Ascending aorta (tissue), 2 donors: ENCODE measurements at regions of chr12 and their contacts with region 1.

Region 1: DNA sequence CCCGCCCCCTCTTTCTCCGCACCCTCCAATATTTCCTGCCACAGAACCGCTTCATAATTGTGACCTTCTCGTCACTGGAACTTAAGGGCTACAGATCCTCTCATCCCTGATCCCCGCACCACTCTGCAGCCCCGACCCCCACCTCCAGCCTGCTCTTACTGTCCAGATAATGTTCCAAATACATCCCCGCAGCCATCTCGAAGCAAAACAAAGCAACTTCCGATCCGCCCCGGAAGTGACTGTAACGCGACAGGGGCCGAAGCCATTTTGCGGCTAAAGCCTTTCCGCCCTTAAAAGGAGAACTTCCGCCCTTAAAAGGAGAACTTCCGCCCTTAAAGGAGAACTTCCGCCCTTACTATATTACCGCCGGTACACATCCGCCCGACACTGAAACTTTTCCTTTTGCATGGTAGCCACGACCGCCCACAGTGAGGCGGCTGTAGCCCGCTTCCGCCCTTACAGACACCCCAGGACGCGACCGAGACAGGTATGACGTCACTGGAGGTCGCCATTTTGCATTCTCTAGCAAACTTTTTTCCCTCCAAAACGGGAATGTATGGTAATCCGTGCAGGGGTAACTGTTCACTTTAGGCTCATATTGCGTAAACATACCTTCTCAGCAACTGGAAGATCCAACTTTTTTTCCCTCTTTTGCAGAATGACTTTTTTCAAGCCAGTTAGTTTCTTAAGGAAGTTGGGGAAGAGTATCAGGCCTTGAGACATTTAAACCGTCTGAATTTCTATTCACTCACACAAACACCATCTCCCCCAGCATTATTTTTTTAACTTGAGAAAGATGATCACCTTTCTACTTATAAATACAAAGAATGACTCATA is at the start of gene ING4:
- DNase-seq: peak; percentile 96 to 99
- H3K4me3 ChIP-seq: peak within 1 kb of the TSS; percentile 75 to 82
- H3K27ac ChIP-seq: peak within 1 kb of the TSS; percentile 77 to 80
- H3K4me1 ChIP-seq: peaks cover 4 to 12% of the 10 kb centered on the region in 2 donors
- H3K27me3 ChIP-seq: no peaks in the 10 kb centered on the region
- CTCF ChIP-seq: no peak
- total RNA-seq, gene ING4: 2.6 TPM

Region 2: GRCh38 chr12:6182116-6182898 is 480.8 kb before region 1 on chr12:
- intact Hi-C with region 1: no loop called
- DNase-seq: peak in 1 of 2 donors; percentile 86
- H3K4me3 ChIP-seq: peak overlapping the region in 1 of 2 donors; percentile 33
- H3K27ac ChIP-seq: peak overlapping the region; percentile 89 to 92
- H3K4me1 ChIP-seq: peaks cover 20 to 56% of the 10 kb centered on the region in 2 donors
- H3K27me3 ChIP-seq: no peaks in the 10 kb centered on the region
- CTCF ChIP-seq: no peak

Region 3: DNA sequence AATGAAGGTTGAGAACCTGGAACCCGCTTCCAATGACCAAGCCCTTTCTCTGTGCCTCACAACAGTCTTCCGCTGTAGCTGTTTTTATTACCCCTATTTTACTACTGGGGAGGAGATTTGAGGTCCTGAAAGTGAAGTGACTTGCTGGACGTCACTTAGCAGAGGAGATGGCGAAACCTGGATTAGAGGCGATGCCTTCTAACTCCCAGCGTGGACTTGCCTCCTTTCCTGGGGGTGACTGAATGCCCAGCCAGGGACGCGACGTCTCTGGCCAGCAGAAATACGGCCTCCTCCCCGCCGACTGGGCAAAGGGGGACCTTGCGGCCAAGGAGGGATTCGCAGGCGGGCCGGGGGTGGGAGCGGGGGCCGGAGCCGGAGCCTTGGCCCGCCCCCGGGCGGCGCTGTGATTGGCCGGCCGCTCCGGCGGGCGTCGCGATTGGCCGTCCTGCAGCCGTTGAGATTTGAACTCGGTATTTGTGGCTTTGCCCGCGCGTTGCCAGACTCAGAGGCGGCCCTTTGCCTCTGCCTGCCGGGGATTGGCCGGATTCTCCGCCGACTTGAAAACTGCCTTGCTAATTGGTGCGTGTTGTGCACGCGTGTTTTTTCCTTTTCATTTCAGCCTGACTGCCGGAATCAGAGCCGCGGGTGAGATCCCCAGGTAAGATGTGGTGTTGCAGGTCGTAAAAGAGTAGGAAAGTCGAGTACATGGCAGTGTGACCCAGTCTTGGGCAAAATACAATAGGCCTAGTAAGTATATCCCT is 169.4 kb before region 1 on chr12 and contains the start of gene NCAPD2:
- intact Hi-C with region 1: loop called (anchors 10 kb)
- DNase-seq: peak; percentile 89 to 98
- H3K4me3 ChIP-seq: peak within 1 kb of the TSS; percentile 67 to 77
- H3K27ac ChIP-seq: peak within 1 kb of the TSS; percentile 79 to 98
- H3K4me1 ChIP-seq: peaks cover 8 to 18% of the 10 kb centered on the region in 2 donors
- H3K27me3 ChIP-seq: no peaks in the 10 kb centered on the region
- CTCF ChIP-seq: peak in 2 of 3 experiments; percentile 31 to 73
- total RNA-seq, gene NCAPD2: 11.7 TPM

Region 4: DNA sequence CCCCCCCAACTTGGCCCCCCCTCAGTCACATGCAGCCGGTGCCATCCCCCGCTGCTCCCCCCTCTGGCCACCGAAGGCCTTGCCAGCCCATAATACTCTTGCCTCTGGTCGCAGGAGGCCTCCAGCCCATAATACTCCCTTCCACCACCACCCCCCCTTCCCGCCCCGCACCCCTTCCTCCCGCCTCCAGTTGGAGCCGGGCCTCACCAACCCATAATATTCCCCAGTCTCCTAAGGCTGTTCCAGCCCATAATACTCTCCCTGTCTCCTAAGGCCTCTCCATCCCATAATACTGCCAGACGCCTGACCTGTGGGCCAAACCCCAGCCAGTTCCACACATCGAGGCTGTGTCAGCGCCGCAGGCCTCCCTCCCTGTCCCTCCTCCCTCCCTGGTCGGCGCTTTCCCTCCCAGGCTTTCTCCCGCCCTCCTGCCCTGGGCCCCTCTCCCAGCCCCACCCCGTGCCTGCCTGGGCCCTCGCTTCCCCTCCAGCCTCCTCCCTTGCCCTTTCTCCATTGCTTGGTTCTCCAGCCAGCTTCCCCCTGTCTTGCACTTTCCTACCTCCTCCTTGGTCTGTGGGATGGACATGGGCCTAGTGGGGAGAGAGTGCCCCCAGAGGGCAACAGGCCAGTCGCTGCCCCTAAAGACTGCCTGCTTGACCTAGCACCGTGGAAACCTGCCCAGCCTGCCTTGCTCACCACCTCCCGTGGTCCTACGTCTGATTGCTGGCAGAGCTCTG is 49.2 kb before region 1 on chr12:
- intact Hi-C with region 1: loop called (anchors 1 kb)
- DNase-seq: peak; percentile 85 to 96
- H3K4me3 ChIP-seq: peak overlapping the region in 1 of 2 donors; percentile 35
- H3K27ac ChIP-seq: peak overlapping the region; percentile 94 to 97
- H3K4me1 ChIP-seq: peaks cover 17 to 22% of the 10 kb centered on the region in 2 donors
- H3K27me3 ChIP-seq: no peaks in the 10 kb centered on the region
- CTCF ChIP-seq: peak in 1 of 3 experiments; percentile 3

Region 5: GRCh38 chr12:6676962-6677361 is 13.8 kb after region 1 on chr12:
- intact Hi-C with region 1: no loop called
- DNase-seq: no peak
- H3K4me3 ChIP-seq: no peak overlapping the region
- H3K27ac ChIP-seq: no peak overlapping the region
- H3K4me1 ChIP-seq: no peaks in the 10 kb centered on the region
- H3K27me3 ChIP-seq: no peaks in the 10 kb centered on the region
- CTCF ChIP-seq: no peak

Region 6: DNA sequence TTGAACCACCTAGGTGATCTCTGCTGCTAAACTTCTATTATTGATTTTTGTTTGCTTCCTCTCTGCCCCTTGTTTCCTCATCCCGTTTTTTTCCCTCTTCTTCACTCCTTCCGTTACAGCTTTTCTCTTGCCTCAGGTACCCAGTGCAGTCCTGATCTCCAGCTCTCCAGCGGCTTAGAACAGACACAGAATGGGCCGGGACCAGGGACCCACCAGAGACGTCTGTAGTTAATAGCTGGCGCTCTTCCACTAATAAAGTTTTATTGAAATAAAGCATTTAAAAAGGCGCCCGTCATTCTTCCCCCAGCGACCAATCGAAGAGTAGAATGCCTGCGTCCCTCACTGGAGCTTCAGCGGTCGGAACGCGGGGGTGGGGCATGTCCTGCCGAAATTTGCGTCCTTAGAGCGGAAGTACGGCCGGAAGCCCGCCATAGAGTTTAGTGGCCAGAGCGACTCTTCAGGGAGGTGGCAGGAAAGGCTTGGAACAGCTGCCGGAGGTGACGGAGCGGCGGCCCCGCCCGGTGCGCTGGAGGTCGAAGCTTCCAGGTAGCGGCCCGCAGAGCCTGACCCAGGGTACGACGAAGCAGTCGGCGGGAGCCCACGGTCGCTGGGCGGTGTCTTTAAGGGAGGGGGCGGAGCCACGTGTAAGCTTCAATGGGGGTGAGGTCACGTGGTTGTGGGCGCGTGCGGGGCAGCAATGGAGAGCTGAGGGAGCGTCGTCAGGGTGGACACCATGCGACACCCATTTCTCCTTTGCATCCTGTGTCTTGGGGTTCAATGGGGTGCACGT is 60.7 kb after region 1 on chr12 and contains the start of gene COPS7A:
- intact Hi-C with region 1: loop called (anchors 1 kb)
- DNase-seq: peak; percentile 91 to 99
- H3K4me3 ChIP-seq: peak within 1 kb of the TSS; percentile 62 to 70
- H3K27ac ChIP-seq: peak within 1 kb of the TSS; percentile 75 to 93
- H3K4me1 ChIP-seq: peaks cover 0 to 8% of the 10 kb centered on the region in 2 donors
- H3K27me3 ChIP-seq: no peaks in the 10 kb centered on the region
- CTCF ChIP-seq: no peak
- total RNA-seq, gene COPS7A: 221 TPM

Region 7: GRCh38 chr12:6752921-6753771 is 90.0 kb after region 1 on chr12 and contains the start of gene MLF2:
- intact Hi-C with region 1: loop called (anchors 1 kb)
- DNase-seq: peak; percentile 93 to 99
- H3K4me3 ChIP-seq: peak within 1 kb of the TSS; percentile 59 to 96
- H3K27ac ChIP-seq: peak within 1 kb of the TSS; percentile 95 to 98
- H3K4me1 ChIP-seq: peaks cover 7 to 9% of the 10 kb centered on the region in 2 donors
- H3K27me3 ChIP-seq: no peaks in the 10 kb centered on the region
- CTCF ChIP-seq: peak in 1 of 3 experiments; percentile 91
- total RNA-seq, gene MLF2: 145 TPM

Region 8: DNA sequence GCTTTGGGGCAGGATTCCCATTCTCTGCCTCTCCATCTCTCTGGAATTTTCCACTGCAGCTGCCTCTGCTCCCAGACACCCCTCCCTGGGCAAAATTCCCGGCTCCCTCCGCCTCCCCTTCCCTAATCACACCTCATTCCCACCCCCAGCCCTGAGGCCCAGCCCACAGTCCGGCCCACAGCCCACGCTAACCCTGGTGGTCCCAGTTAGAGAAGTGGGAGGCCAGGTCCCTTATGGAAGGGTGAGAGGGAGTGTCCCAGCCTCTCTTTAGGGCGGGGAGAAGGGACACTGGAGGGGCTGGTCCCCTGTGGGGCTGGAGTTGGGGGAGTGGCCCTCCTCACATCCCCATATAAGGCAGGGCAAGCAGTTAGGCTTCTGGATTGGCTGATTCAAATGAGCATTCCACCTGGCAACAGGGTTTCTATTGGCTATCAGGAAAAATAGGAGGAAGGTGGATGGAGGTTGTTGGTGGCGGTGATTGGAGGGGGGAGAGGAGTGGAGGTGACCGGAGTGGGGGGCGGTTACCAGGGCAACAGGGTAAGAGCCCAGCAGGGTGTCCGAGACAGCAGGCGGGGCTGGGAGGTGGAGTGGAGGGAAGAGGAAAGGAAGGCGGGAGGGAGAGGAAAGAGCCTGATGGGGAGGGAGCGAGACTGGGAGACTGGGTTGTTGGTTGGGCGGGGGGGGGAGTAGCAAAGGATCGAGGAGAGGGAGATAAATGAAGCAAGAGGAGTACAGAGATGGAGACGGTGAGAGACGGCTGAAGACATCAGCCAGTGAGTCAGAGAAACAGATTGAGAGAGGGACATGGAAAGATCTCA is 101.1 kb after region 1 on chr12:
- intact Hi-C with region 1: loop called (anchors 5 kb)
- DNase-seq: peak; percentile 85 to 96
- H3K4me3 ChIP-seq: peak overlapping the region; percentile 96 to 97
- H3K27ac ChIP-seq: peak overlapping the region; percentile 84 to 97
- H3K4me1 ChIP-seq: peaks cover 10 to 29% of the 10 kb centered on the region in 2 donors
- H3K27me3 ChIP-seq: no peaks in the 10 kb centered on the region
- CTCF ChIP-seq: no peak